ENCODE measurements at regions of chr12 and their contacts with region 1.

Region 1: GRCh38 chr12:26853303-26854030 is 20.5 kb upstream of the ITPR2 start:
- DNase-seq: no peak
- ATAC-seq: peak; percentile 97
- H3K4me3 ChIP-seq: no peak overlapping the region
- H3K27ac ChIP-seq: no peak overlapping the region
- H3K4me1 ChIP-seq: peaks cover 3% of the 10 kb centered on the region; the same call in 1 of the 2 replicates
- H3K27me3 ChIP-seq: no peaks in the 10 kb centered on the region
- CTCF ChIP-seq: peak; percentile 81 to 94 (median 88); a peak in 5 of 6 replicates
- EP300 ChIP-seq: no peak; a peak in 1 of 4 replicates
- POLR2A ChIP-seq: no peak
- RAD21 ChIP-seq: peak; percentile 93

Region 2: GRCh38 chr12:25377469-25378177 is 1475.8 kb before region 1 on chr12:
- CTCF ChIA-PET with region 1: no interaction called
- POLR2A ChIA-PET with region 1: no interaction called
- RAD21 ChIA-PET with region 1: no interaction called
- SMC1A ChIA-PET with region 1: no interaction called
- in situ Hi-C with region 1: no loop called
- intact Hi-C with region 1: loop called (anchors 10 kb)
- DNase-seq: no peak
- ATAC-seq: peak; percentile 74
- H3K4me3 ChIP-seq: no peak overlapping the region
- H3K27ac ChIP-seq: no peak overlapping the region
- H3K4me1 ChIP-seq: 0 out of 2 replicates have a peak, but pooled peaks cover 1% of the 10 kb centered on the region
- H3K27me3 ChIP-seq: no peaks in the 10 kb centered on the region
- CTCF ChIP-seq: no peak
- EP300 ChIP-seq: no peak
- POLR2A ChIP-seq: no peak
- RAD21 ChIP-seq: no peak

Region 3: GRCh38 chr12:26402648-26403047 is 450.8 kb before region 1 on chr12:
- CTCF ChIA-PET with region 1: no interaction called
- POLR2A ChIA-PET with region 1: no interaction called
- RAD21 ChIA-PET with region 1: no interaction called
- SMC1A ChIA-PET with region 1: no interaction called
- in situ Hi-C with region 1: no loop called
- intact Hi-C with region 1: no loop called
- DNase-seq: no peak
- ATAC-seq: peak; percentile 36; the same call in 2 of the 3 replicates
- H3K4me3 ChIP-seq: no peak overlapping the region
- H3K27ac ChIP-seq: no peak overlapping the region
- H3K4me1 ChIP-seq: no peaks in the 10 kb centered on the region
- H3K27me3 ChIP-seq: no peaks in the 10 kb centered on the region
- CTCF ChIP-seq: peak in 1 of 3 experiments; percentile 8; a peak in 2 of 6 replicates
- EP300 ChIP-seq: no peak
- POLR2A ChIP-seq: no peak
- RAD21 ChIP-seq: no peak

Region 4: GRCh38 chr12:26863502-26863901 is 10.0 kb after region 1 on chr12:
- CTCF ChIA-PET with region 1: interaction called, 21 read pairs
- POLR2A ChIA-PET with region 1: interaction called, 8 read pairs
- RAD21 ChIA-PET with region 1: interaction called, 12 read pairs
- SMC1A ChIA-PET with region 1: interaction called, 11 read pairs
- in situ Hi-C with region 1: no loop called
- intact Hi-C with region 1: no loop called
- DNase-seq: no peak
- ATAC-seq: 0 out of 3 replicates have a peak, but pooled peaks have one; percentile 17
- H3K4me3 ChIP-seq: no peak overlapping the region
- H3K27ac ChIP-seq: no peak overlapping the region
- H3K4me1 ChIP-seq: peaks cover 5% of the 10 kb centered on the region; the same call in 1 of the 2 replicates
- H3K27me3 ChIP-seq: no peaks in the 10 kb centered on the region
- CTCF ChIP-seq: 0 out of 6 replicates have a peak, but pooled peaks of 1 of the 3 experiments have one; percentile 24
- EP300 ChIP-seq: no peak
- POLR2A ChIP-seq: no peak
- RAD21 ChIP-seq: no peak

Region 5: DNA sequence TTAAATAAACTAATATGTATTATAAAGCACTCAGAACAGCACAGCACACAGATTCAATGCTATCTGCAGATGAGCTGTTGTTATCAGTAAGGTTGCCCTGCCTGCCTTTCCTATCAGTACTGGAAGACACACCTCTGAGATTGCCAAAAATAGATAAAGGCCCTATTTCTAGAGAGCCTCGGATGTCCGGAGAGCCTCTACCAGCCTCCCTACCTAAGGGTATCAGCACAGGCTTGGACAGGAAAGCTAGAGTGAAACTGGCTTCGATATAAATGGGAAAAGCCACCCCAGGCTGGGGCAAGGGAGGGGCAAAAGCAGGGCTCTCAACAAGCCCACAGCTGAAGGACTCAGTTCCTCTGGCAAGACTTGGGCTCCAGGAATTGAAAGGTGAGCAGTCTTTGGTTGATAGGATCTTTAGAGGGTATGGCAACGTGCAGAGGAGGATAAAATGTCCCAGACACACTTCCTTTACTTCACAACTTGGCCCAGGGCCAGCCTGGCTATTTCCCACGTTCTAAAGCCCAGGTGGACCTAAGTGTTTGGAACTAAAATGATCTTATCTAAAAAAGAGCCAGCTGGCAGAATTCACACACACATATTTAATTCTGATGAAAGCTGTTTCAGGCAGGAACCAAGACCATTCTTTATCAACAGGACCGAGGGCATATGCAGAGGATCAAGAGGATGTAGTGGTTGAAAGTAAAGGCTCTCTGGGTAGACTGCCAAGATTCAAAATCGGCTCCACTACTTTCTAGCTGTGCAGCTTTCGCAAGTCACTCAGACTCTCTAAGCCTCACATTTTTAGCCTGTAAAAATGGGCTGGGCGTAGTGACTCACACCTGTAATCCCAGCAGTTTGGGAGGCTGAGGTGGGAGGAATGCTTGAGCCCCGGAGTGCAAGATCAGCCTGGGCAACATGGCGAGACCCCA is 17.3 kb after region 1 on chr12:
- CTCF ChIA-PET with region 1: interaction called, 115 read pairs
- POLR2A ChIA-PET with region 1: interaction called, 8 read pairs
- RAD21 ChIA-PET with region 1: interaction called, 12 read pairs
- SMC1A ChIA-PET with region 1: interaction called, 98 read pairs
- in situ Hi-C with region 1: no loop called
- intact Hi-C with region 1: no loop called
- DNase-seq: peak; percentile 35
- ATAC-seq: peak; percentile 33
- H3K4me3 ChIP-seq: no peak overlapping the region
- H3K27ac ChIP-seq: no peak overlapping the region; the same call in 1 of the 2 replicates
- H3K4me1 ChIP-seq: peaks cover 48% of the 10 kb centered on the region
- H3K27me3 ChIP-seq: no peaks in the 10 kb centered on the region
- CTCF ChIP-seq: no peak
- EP300 ChIP-seq: no peak
- POLR2A ChIP-seq: no peak
- RAD21 ChIP-seq: no peak

Region 6: DNA sequence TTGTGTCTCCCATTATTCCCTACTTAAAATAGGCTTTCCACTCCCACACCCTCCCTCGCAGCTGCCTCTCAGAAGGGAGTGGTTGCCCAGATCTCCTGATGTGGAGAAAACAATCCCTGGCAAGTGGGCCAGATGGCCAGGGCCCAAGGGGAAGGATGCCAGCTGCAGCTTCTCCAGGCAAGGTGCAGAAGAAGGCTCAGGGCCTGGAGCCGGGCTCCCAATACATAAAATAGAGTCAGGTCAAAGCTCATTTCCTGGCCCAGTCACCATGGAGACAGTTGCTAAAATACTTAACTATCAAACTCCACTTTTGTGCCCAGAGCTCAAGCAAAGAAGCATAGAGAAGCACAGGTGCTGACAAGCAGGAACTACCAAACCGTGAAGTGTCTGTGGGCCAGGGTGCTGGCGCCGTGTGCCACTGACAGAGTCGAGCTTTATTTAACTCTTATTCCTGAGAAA is 25.2 kb after region 1 on chr12:
- CTCF ChIA-PET with region 1: interaction called, 158 read pairs
- POLR2A ChIA-PET with region 1: interaction called, 8 read pairs
- RAD21 ChIA-PET with region 1: interaction called, 60 read pairs
- SMC1A ChIA-PET with region 1: interaction called, 98 read pairs
- in situ Hi-C with region 1: no loop called
- intact Hi-C with region 1: no loop called
- DNase-seq: no peak
- ATAC-seq: peak; percentile 77
- H3K4me3 ChIP-seq: no peak overlapping the region
- H3K27ac ChIP-seq: no peak overlapping the region
- H3K4me1 ChIP-seq: peaks cover 15% of the 10 kb centered on the region
- H3K27me3 ChIP-seq: no peaks in the 10 kb centered on the region
- CTCF ChIP-seq: no peak
- EP300 ChIP-seq: no peak; a peak in 1 of 4 replicates
- POLR2A ChIP-seq: no peak
- RAD21 ChIP-seq: no peak

Measured in GM12878 (cell line).